ENCODE measurements at regions of chr10 and their contacts with region 1.

Region 1: GRCh38 chr10:4909118-4909517 is 54.1 kb upstream of the AKR1C1 start:
- DNase-seq: no peak
- ATAC-seq: no peak
- H3K4me3 ChIP-seq: no peak overlapping the region
- H3K27ac ChIP-seq: no peak overlapping the region
- H3K4me1 ChIP-seq: peaks cover 9% of the 10 kb centered on the region
- H3K27me3 ChIP-seq: no peaks in the 10 kb centered on the region
- CTCF ChIP-seq: no peak
- POLR2A ChIP-seq: no peak

Region 2: GRCh38 chr10:4892681-4893080 is 16.4 kb before region 1 on chr10:
- intact Hi-C with region 1: loop called (anchors 2 kb)
- DNase-seq: no peak
- ATAC-seq: no peak
- H3K4me3 ChIP-seq: no peak overlapping the region
- H3K27ac ChIP-seq: no peak overlapping the region
- H3K4me1 ChIP-seq: peaks cover 13% of the 10 kb centered on the region
- H3K27me3 ChIP-seq: no peaks in the 10 kb centered on the region
- CTCF ChIP-seq: no peak
- POLR2A ChIP-seq: no peak